MCF 10A (cell line): ENCODE measurements at regions of chr16 and their contacts with region 1.

Region 1: DNA sequence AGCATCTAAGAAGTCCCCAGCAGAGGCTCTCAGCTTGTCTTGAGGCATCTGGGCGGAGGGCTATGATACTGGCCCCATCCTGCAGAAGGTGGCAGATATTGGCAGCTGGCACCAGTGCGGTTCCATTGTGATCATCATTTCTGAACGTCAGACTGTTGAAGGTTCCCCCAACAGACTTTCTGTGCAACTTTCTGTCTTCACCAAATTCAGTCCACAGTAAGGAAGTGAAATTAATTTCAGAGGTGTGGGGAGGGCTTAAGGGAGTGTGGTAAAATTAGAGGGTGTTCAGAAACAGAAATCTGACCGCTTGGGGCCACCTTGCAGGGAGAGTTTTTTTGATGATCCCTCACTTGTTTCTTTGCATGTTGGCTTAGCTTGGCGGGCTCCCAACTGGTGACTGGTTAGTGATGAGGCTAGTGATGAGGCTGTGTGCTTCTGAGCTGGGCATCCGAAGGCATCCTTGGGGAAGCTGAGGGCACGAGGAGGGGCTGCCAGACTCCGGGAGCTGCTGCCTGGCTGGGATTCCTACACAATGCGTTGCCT is at the start of gene CIITA:
- DNase-seq: peak; percentile 94
- H3K4me3 Mint-ChIP-seq: no peak within 1 kb of the TSS
- H3K27ac Mint-ChIP-seq: no peak within 1 kb of the TSS
- H3K4me1 Mint-ChIP-seq: peaks cover 13% of the 10 kb centered on the region
- H3K27me3 Mint-ChIP-seq: peaks cover 40% of the 10 kb centered on the region
- CTCF ChIP-seq: no peak
- total RNA-seq, gene CIITA: 0.12 TPM in 1 of 2 replicates, not detected in the other

Region 2: DNA sequence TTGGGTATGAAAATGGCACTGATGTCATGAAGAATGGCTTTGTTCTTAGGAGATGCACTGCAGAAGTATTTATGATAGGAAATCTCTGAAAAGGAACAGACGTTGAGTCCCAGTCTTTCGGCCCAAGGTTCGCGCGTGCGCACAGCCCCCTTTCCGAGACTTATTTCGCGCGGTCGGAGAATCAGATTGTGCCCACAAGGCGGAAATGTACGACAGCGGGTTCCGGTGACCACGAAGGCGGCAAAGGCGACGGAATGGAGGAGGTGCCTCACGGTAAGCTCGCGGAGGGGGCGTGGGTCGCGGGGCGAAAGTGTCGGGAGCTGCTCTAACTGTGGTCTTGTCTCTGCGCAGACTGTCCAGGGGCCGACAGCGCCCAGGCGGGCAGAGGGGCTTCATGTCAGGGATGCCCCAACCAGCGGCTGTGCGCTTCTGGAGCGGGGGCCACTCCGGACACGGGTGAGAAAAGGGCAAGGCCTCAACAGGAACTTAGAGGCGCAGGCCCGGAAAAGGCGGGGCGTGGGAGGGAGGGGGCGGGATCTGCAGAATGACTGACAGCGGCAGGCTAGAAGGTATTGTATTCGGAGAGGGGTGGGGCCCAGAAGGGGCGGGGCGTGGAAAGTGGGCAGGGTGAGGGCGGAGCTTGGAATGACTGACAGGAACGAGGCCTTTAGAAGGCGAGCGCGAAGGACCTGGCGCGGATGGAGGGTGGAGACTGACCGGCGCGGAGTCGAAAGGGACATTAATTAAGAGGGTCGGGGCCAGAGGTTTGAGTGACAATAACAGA is 133.1 kb before region 1 on chr16 and contains the start of gene NUBP1:
- CTCF ChIA-PET with region 1: interaction called, 3 read pairs
- POLR2A ChIA-PET with region 1: interaction called, 3 read pairs
- intact Hi-C with region 1: loop called (anchors 5 kb)
- DNase-seq: peak; percentile 98
- H3K4me3 Mint-ChIP-seq: peak within 1 kb of the TSS; percentile 95
- H3K27ac Mint-ChIP-seq: peak within 1 kb of the TSS; percentile 100
- H3K4me1 Mint-ChIP-seq: peaks cover 16% of the 10 kb centered on the region
- H3K27me3 Mint-ChIP-seq: no peaks in the 10 kb centered on the region
- CTCF ChIP-seq: no peak
- total RNA-seq, gene NUBP1: 17.3 and 17.8 TPM in 2 replicates

Region 3: GRCh38 chr16:10828851-10829731 is 47.8 kb before region 1 on chr16:
- CTCF ChIA-PET with region 1: interaction called, 3 read pairs
- POLR2A ChIA-PET with region 1: interaction called, 4 read pairs
- intact Hi-C with region 1: loop called (anchors 5 kb)
- DNase-seq: peak; percentile 99
- H3K4me3 Mint-ChIP-seq: peak overlapping the region; percentile 55
- H3K27ac Mint-ChIP-seq: peak overlapping the region; percentile 89
- H3K4me1 Mint-ChIP-seq: peaks cover 19% of the 10 kb centered on the region
- H3K27me3 Mint-ChIP-seq: no peaks in the 10 kb centered on the region
- CTCF ChIP-seq: no peak

Region 4: DNA sequence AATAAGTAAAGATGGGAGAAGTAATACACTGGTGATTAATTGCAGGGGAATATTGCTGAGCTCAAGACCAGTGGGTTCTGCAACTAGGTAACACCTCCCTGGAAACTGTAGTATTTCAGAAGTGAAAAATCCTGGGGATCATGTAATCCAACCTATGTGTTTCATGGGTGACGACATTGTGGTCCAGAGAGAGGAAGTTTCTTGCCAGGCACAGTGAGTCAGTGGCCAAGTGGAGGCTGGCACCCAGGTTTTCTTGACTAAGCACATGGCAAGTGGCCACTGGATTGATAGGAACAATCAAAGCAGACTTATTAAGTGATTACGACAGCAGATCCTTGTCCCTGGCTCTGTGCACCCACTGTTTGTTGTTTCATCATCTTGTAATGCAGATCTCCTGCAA is 14.4 kb before region 1 on chr16:
- CTCF ChIA-PET with region 1: interaction called, 3 read pairs
- POLR2A ChIA-PET with region 1: interaction called, 14 read pairs
- intact Hi-C with region 1: no loop called
- DNase-seq: peak; percentile 99
- H3K4me3 Mint-ChIP-seq: no peak overlapping the region
- H3K27ac Mint-ChIP-seq: no peak overlapping the region
- H3K4me1 Mint-ChIP-seq: peaks cover 41% of the 10 kb centered on the region
- H3K27me3 Mint-ChIP-seq: no peaks in the 10 kb centered on the region
- CTCF ChIP-seq: no peak

Region 5: GRCh38 chr16:10964039-10964890 is 87.4 kb after region 1 on chr16:
- CTCF ChIA-PET with region 1: no interaction called
- POLR2A ChIA-PET with region 1: no interaction called
- intact Hi-C with region 1: no loop called
- DNase-seq: peak; percentile 79
- H3K4me3 Mint-ChIP-seq: no peak overlapping the region
- H3K27ac Mint-ChIP-seq: no peak overlapping the region
- H3K4me1 Mint-ChIP-seq: peaks cover 18% of the 10 kb centered on the region
- H3K27me3 Mint-ChIP-seq: no peaks in the 10 kb centered on the region
- CTCF ChIP-seq: peak; percentile 93